Mammary epithelial cell (primary cell): ENCODE measurements at regions of chr16 and their contacts with region 1.

Region 1: DNA sequence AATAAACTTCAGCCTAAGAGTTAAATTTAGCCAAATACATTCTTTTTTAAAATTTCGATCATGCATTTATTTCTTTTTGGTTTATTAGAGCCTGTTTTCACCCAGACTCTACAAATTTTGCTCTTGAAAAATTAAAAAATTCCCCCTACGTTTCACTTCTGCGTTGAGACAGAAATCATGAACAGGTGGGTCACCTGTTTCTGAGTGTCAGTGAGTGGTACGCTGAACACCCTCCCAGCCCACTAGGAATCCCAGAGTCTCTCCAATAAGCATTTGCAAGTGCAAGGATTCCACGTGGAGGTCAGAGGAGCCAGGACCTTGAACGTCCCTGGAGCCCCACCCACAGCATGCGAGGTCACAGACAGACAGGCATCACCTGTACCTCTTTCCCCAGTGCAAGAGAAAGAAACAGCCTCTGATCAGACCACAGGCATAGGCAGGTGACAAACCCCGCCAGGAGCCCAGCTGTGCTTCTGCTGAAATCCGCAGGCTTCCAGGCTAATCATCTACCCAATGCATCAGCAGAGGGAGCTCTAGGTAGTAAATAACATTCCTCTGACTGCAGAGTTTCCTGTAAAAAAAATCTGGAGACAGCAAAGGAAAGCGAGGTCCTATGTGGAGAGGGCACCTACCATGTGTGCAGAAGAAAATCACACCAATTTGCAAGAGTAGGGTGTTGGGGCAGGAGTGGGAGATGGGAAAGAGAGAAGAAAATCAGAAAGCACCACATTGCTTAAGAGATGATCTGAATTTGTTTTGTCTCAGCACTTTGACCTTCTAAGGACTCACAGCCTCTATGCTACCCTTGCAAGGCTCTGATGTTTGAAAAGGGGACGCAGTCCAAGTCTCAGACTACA is 5.9 kb upstream of the XYLT1 start:
- DNase-seq: peak; percentile 36
- H3K4me3 ChIP-seq: no peak overlapping the region
- H3K27ac ChIP-seq: no peak overlapping the region
- H3K4me1 ChIP-seq: peaks cover under 1% of the 10 kb centered on the region
- H3K27me3 ChIP-seq: no peaks in the 10 kb centered on the region
- CTCF ChIP-seq: peak; percentile 72 to 78

Region 2: GRCh38 chr16:16861546-16861945 is 615.1 kb before region 1 on chr16:
- CTCF ChIA-PET with region 1: no interaction called
- dilution Hi-C with region 1: no loop called
- in situ Hi-C with region 1: no loop called
- intact Hi-C with region 1: loop called (anchors 10 kb)
- DNase-seq: no peak
- H3K4me3 ChIP-seq: no peak overlapping the region
- H3K27ac ChIP-seq: no peak overlapping the region
- H3K4me1 ChIP-seq: no peaks in the 10 kb centered on the region
- H3K27me3 ChIP-seq: no peaks in the 10 kb centered on the region
- CTCF ChIP-seq: peak; percentile 33 to 58

Region 3: DNA sequence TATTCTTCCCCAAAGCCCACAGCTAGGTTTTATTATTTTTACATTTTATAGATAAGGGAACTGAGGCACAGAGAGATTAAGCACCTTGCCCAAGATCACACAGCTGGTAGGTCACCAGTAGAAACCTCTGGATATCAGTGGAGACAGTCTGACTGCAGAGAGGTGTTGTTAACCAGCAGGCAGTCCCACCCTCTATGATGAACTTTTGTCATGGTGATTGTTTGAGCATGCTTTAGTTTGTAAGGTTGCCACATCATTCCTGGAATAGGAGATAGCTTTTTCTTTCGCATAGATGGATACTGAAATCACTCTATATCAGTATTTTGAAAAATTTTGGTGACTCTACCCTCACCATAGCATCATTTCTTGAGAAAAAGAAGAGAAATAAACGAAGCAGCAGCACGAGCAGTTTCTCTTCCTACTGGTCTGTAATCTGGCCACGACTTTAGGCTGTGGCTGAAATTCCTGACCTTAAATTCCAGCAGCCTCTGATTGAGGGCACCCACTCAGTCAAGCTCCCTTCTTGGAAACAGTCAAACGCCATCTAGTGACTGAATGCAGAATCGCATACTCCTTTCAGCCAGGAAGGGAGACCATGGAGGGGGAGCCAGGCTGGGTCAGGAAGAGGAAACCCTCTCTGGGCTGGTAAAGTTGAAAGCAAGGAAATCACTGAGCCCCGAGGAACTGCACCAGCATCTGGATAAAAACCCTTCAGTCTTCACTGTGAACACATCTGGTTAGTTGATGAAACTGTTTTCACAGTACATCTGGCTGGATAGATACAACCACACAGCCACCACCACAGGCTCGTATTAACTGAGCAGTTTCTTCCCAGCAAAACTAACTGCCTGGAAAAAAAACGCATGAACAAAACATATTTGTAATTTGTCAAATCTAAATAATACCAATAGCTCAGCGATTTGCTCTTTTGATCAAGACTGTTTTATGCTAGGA is 102.6 kb after region 1 on chr16:
- CTCF ChIA-PET with region 1: interaction called, 11 read pairs
- dilution Hi-C with region 1: no loop called
- in situ Hi-C with region 1: loop called in 1 of 2 experiments (anchors 5 kb)
- intact Hi-C with region 1: loop called (anchors 1 kb)
- DNase-seq: peak; percentile 60
- H3K4me3 ChIP-seq: no peak overlapping the region
- H3K27ac ChIP-seq: no peak overlapping the region
- H3K4me1 ChIP-seq: peaks cover 9% of the 10 kb centered on the region
- H3K27me3 ChIP-seq: no peaks in the 10 kb centered on the region
- CTCF ChIP-seq: peak; percentile 94 to 96

Region 4: DNA sequence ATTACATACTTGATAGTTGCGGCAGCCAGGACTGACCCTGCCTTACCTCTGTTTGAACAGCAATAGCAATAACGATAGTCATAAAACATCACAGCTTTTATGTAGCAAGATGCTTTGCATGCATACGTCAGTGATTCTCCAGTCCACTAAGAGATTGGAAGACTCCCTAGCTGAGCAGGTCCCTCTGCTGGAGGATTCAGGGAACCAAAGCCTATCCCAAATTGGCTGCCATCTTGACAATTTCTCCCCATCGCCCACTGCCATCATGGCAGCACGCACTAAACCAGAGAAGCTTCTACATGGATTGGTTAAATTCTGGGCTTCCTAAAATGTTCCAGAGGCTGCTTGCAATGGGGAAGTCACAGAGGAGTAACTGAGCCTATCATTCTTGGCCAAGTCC is 354.7 kb after region 1 on chr16:
- CTCF ChIA-PET with region 1: no interaction called
- dilution Hi-C with region 1: loop called (anchors 25 kb)
- in situ Hi-C with region 1: no loop called
- intact Hi-C with region 1: loop called (anchors 5 kb)
- DNase-seq: no peak
- H3K4me3 ChIP-seq: no peak overlapping the region
- H3K27ac ChIP-seq: no peak overlapping the region
- H3K4me1 ChIP-seq: no peaks in the 10 kb centered on the region
- H3K27me3 ChIP-seq: no peaks in the 10 kb centered on the region
- CTCF ChIP-seq: no peak

Region 5: GRCh38 chr16:17921355-17921953 is 444.8 kb after region 1 on chr16:
- CTCF ChIA-PET with region 1: interaction called, 4 read pairs
- dilution Hi-C with region 1: no loop called
- in situ Hi-C with region 1: no loop called
- intact Hi-C with region 1: loop called (anchors 10 kb)
- DNase-seq: peak; percentile 21
- H3K4me3 ChIP-seq: no peak overlapping the region
- H3K27ac ChIP-seq: no peak overlapping the region
- H3K4me1 ChIP-seq: no peaks in the 10 kb centered on the region
- H3K27me3 ChIP-seq: no peaks in the 10 kb centered on the region
- CTCF ChIP-seq: peak; percentile 35 to 52